Posterior cingulate gyrus (tissue), 11 donors: ENCODE measurements at regions of chr14 and their contacts with region 1.

Region 1: DNA sequence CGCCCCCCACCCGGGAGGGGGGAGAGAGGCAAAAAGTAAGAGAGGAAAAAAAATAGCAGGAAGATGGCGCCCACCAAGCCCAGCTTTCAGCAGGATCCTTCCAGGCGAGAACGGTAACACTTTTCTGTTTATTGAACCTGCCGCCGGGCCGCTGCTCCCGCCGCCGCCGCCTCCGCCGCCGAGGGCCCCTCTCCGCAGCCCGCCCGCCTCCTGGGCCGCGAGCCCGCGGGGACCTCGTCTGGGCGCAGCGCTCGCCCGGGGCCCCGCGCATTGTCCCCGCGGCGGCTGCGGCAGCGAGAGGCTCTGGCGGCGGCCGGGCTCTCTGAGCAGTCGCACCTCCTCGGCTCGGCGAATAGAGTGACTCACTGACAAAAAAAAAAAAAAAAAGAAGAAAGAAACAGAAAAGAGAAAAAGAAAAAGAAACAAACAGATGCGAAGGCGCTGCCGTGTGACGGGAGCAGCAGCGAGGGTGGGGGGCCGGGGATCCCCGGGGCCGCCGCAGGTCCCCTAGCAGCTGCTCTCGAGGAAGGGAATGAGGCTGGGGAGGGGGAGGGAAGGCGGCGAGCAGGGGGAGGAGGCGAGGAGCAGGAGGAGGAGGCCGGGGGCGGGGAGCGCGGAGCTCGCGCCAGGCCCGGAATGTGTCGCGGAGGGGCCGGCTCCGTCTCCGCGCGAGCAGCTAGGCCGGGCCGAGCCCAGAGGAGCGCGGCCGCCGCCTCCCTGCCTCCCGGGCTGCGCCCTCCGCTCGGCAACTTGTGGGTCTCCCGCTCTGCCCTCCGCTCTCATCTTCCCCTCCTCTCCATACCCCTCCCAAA is 781 bp downstream of the NPAS3 start:
- DNase-seq: peak; percentile 66 to 96 (median 74)

Region 2: GRCh38 chr14:32710731-32711680 is 228.5 kb before region 1 on chr14:
- intact Hi-C with region 1: loop called (anchors 5 kb)
- DNase-seq: peak in 3 of 10 donors; percentile 28 to 62 (median 46)

Region 3: GRCh38 chr14:32998433-32998832 is 59.0 kb after region 1 on chr14:
- intact Hi-C with region 1: loop called (anchors 1 kb)
- DNase-seq: no peak

Region 4: GRCh38 chr14:33357225-33358010 is 418.0 kb after region 1 on chr14:
- intact Hi-C with region 1: loop called (anchors 5 kb)
- DNase-seq: peak in 7 of 10 donors; percentile 14 to 87 (median 30)

Region 5: DNA sequence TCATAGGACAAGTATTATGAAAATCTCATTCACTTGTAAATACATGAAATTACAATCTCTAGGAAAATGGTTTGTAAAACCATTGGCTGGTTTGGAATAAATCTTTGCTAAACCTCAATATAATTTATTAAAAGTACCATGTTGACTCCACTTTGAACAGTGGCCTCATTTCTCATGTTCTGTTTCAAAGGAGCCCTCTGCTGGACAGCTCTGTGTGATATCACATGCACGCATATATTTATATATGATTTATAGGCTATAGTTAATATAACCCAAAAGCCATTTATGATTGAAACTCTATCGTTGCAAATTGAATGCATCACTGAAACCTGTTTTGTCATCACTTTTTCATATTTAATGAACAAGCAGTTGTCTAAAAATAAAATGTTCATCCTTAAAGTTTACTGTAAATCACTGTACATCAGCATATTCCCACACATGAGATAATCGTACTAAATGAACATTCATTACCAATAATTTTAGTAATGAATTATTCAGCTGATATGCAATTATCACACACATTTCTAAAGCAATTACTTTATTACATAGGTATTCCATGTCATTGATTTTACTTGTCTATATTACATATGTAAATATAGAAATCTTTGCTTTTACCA is 493.1 kb after region 1 on chr14:
- intact Hi-C with region 1: loop called (anchors 5 kb)
- DNase-seq: peak in 3 of 10 donors; percentile 13 to 58 (median 36)

Region 6: DNA sequence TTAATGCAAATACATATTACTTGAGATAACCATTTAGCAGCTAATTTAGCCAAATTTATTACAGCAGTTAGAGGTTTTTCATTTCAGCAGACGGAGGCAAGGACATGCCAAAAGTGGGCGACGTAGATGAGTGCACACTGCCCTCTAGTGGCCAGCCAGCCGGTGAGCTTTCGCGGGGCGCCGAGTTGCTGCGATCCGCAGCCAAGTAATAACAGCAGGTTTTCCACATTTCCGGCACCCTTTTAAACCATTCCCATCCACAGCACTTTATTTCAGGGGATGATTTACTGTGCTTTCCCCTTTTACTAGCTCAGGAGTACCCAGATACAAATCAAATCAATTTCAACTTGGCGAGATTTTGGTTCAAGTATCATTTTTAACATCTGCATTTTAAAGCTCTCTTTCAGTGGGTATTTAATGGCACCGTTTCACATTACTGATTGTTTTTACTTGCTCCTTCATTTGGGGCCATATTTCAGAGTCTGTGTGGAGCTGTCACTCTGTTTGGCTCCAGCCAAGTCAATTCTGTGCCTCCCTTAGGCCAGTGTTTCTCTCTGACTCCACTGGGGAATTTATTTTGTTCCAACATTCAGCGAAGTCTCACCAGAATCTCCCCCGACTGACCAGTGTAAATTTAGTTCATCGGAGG is 853.4 kb after region 1 on chr14:
- intact Hi-C with region 1: loop called (anchors 2 kb)
- DNase-seq: peak; percentile 80 to 98 (median 90)